ENCODE measurements at regions of chr9 and their contacts with region 1.

Region 1: DNA sequence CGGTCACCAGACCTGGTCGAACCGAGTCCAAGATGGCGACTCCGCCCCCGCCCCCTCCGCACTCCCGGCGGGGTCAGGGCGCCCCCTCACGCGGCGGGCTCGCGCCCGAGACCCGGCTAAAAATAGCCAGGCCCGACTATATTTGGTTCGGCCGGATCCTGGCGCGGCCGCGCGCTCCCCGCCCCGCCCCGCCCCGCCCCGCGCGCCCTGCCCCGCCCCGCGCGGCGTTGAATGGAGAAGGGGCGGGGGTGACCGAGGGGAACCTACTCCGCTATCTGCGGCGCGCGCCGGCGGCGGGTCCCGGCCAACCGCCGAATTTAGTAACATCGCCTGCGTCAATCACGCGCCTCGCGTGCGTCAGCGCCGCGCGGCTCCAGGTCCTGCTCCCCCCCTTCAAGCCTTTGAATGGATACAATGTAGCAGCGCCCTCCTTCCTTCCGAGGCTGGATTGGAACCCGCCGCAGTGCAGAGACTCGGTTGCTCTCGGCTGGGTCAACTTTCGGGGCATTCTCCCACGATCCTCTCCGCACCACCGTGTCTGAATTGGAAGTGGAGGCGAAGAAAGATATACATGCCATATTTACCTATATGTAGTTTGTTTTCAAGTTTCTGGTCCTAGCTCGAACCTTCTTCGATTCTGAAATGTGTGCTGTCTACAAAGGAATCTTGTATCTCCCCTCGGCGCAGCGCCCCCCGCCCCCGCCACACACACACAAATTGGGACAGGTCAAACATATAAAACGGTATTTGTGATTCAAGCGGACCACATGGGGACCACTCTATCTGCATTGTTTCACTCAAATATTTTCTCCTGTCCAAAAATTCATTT is 1.6 kb upstream of the NR4A3 start:
- DNase-seq: peak; percentile 94 to 97 (median 96)
- ATAC-seq: peak; percentile 68 to 79 (median 72)
- H3K4me3 ChIP-seq: peak overlapping the region; percentile 66 to 95 (median 88)
- H3K27ac ChIP-seq: peak overlapping the region; percentile 97 to 100 (median 98)
- H3K4me1 ChIP-seq: peaks cover 0 to 34% (median 22%) of the 10 kb centered on the region in 12 donors
- H3K27me3 ChIP-seq: peaks cover 0 to 14% (median 3%) of the 10 kb centered on the region in 9 donors
- CTCF ChIP-seq: peak in 6 of 12 donors; percentile 16 to 42 (median 31)
- POLR2A ChIP-seq: peak in 1 of 2 donors; percentile 34

Region 2: DNA sequence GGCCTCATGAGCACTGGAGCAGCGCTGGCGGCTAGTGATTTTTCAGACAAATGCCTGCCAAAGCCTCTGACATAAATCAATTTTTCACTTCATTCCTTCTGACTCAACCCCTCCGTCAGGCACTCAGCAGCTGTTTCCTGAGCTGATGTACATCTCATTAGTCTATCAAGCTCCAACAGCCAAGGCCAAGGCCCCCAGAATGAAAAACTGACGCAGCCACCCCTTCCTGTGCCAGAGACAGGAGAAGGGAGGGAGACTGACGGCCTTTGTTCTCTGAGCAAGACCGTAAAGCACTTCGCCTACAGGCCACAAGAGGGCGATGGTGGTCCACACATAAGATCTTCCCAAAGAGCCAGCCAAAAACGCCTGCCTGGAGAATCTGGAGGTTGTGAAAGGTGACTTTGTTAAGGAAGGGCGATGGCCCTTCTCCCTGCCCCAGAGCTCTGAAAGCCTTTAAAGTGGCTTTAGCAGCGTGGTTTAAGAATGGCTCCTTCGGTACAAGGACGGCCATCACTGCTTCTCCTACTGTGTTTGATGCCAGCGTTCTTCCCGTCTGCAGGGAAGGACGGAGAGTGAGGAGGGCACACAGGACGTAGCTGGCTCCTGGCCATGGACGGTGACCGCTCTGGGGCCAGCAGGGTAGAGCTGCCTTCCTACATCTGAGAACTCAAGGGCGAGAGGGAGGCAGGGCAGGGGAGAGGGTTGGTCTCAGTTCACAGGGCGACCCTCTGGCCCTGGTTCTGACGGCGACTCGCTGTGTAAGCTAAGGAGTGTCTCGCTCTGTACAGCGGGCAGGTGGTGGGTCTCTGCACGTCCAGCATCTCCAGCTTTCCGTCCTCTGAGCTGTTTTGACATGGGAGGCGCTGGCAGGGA is 635.4 kb before region 1 on chr9:
- intact Hi-C with region 1: loop called in 1 of 10 experiments (anchors 5 kb)
- DNase-seq: peak; percentile 82 to 89 (median 86)
- ATAC-seq: peak; percentile 82 to 94 (median 90)
- H3K4me3 ChIP-seq: peak overlapping the region in 9 of 12 donors; percentile 14 to 46 (median 37)
- H3K27ac ChIP-seq: peak overlapping the region in 7 of 12 donors; percentile 10 to 51 (median 32)
- H3K4me1 ChIP-seq: peaks cover 0 to 19% (median 6%) of the 10 kb centered on the region in 12 donors
- H3K27me3 ChIP-seq: peaks cover 0 to 4% (median 0%) of the 10 kb centered on the region in 9 donors
- CTCF ChIP-seq: peak; percentile 89 to 98 (median 93)
- POLR2A ChIP-seq: no peak

Region 3: GRCh38 chr9:99266255-99267023 is 553.6 kb before region 1 on chr9:
- intact Hi-C with region 1: loop called in 2 of 10 experiments (anchors 5 kb)
- DNase-seq: peak; percentile 63 to 79 (median 66)
- ATAC-seq: peak; percentile 55 to 88 (median 82)
- H3K4me3 ChIP-seq: no peak overlapping the region
- H3K27ac ChIP-seq: no peak overlapping the region
- H3K4me1 ChIP-seq: peaks cover 0 to 10% (median 2%) of the 10 kb centered on the region in 12 donors
- H3K27me3 ChIP-seq: no peaks in the 10 kb centered on the region
- CTCF ChIP-seq: peak; percentile 65 to 90 (median 78)
- POLR2A ChIP-seq: no peak

Region 4: GRCh38 chr9:99322294-99322693 is 497.8 kb before region 1 on chr9:
- intact Hi-C with region 1: no loop called
- DNase-seq: no peak
- ATAC-seq: no peak
- H3K4me3 ChIP-seq: no peak overlapping the region
- H3K27ac ChIP-seq: no peak overlapping the region
- H3K4me1 ChIP-seq: no peaks in the 10 kb centered on the region
- H3K27me3 ChIP-seq: peaks cover 0 to 5% (median 0%) of the 10 kb centered on the region in 9 donors
- CTCF ChIP-seq: no peak
- POLR2A ChIP-seq: no peak

Region 5: GRCh38 chr9:99451112-99451606 is 368.9 kb before region 1 on chr9:
- intact Hi-C with region 1: loop called in 2 of 10 experiments (anchors 2 to 10 kb)
- DNase-seq: peak in 4 of 5 donors; percentile 49 to 82 (median 66)
- ATAC-seq: peak; percentile 97 to 99 (median 98)
- H3K4me3 ChIP-seq: no peak overlapping the region
- H3K27ac ChIP-seq: peak overlapping the region in 11 of 12 donors; percentile 34 to 84 (median 69)
- H3K4me1 ChIP-seq: peaks cover 0 to 15% (median 2%) of the 10 kb centered on the region in 12 donors
- H3K27me3 ChIP-seq: no peaks in the 10 kb centered on the region
- CTCF ChIP-seq: no peak
- POLR2A ChIP-seq: no peak

Region 6: DNA sequence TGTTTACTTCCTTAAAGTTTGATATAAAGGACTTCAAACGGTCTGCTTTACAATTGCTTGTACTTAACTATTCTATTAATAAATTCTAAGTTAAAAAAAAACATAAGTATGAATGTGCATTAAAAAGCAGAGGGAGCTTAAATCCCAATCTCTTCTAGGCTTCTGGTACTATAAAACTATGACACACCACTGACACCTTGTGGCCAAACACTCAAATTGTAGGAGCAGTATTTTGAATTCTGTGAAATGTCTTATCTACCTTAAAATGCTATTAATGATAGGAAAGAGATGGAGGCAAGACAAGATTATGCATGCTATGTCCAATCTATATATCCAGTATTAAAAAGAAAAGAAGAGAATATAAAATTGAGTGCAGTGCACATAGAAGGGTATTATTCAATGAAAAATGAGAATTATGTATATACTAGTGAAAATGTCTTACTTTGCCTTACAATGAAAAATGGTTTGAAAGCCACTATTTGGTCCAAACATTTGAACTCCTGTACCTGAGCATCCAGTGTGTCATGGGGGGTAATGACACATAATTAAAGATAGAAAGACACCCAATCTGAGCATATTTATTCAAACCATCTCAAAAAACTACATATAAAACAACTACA is 191.1 kb after region 1 on chr9:
- intact Hi-C with region 1: loop called in 2 of 10 experiments (anchors 10 kb)
- DNase-seq: no peak
- ATAC-seq: no peak
- H3K4me3 ChIP-seq: no peak overlapping the region
- H3K27ac ChIP-seq: no peak overlapping the region
- H3K4me1 ChIP-seq: no peaks in the 10 kb centered on the region
- H3K27me3 ChIP-seq: no peaks in the 10 kb centered on the region
- CTCF ChIP-seq: peak; percentile 19 to 62 (median 48)
- POLR2A ChIP-seq: no peak

Region 7: DNA sequence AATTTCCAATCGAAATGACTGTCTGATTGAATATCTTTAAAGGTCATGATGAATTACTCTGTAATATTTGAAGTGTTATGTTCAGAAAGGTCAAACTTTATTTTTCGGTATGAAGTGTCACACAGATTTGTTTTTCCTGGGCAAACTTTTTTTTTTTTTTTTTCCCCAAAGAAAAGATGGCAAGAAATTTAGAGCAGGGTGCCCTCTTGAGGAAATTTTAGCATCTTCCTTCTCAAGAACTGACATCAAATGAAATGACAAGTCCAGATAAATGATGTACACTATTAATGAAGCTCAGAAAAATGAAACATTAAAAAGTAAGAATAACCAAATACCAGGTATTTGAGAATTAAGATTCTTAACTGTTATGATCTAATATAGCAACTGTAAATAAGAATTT is 402.6 kb after region 1 on chr9:
- intact Hi-C with region 1: loop called in 3 of 10 experiments (anchors 10 kb)
- DNase-seq: no peak
- ATAC-seq: no peak
- H3K4me3 ChIP-seq: no peak overlapping the region
- H3K27ac ChIP-seq: no peak overlapping the region
- H3K4me1 ChIP-seq: peaks cover 0 to 17% (median 0%) of the 10 kb centered on the region in 12 donors
- H3K27me3 ChIP-seq: no peaks in the 10 kb centered on the region
- CTCF ChIP-seq: peak in 9 of 12 donors; percentile 9 to 59 (median 38)
- POLR2A ChIP-seq: no peak

Measured in heart left ventricle (tissue), 16 donors.